ENCODE measurements at regions of chr12 and their contacts with region 1.

Region 1: DNA sequence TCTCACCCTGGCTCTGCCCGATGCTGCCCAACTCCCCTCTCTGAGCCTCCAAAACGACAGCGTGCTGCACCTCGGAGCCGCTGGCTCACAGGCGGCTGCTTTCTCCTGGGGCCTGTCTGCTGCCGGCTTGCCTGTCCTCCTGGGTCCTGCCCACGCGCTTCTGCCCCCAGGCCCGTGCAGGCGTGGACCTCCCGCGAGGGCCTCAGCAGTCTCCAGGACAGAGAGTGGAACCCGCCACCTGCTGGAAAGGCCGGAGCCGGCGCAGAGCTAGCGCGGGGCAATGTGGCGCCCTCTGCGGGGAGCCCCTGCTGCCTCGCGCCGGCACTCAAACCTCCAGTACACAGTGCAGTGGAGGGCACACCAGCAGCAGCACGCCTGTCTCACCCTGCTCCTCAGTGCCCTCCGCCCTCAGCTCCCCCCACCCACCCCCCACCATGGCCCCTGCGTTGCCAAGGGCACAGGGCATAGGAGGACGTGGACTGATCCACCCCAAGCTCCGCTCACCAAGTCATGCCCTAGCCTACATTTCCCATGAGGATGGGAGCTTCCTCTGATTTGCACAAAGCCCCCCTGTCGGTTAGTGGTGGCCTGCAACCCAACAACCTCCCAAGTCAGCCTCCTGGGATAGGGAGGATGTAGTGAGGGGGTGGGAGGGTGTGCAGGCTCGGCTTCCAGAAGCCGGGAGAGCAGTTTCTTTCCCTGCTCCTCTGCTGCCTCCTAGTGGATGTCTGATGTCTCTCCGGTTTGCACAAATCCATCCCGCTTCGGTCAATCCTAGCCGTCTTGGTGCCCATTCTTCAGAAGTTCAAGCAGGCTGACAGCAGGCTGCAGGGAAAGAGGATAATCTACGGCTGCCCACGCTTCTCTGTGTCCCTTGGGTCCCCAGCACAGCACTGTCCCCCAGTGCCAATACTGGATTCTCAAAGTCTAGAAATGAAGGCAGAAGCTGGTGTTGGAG is 25.2 kb downstream of the KRT8 start:
- DNase-seq: peak; percentile 94
- H3K4me3 Mint-ChIP-seq: peak overlapping the region; percentile 48
- H3K27ac Mint-ChIP-seq: no peak overlapping the region
- H3K4me1 Mint-ChIP-seq: peaks cover 48% of the 10 kb centered on the region
- H3K27me3 Mint-ChIP-seq: no peaks in the 10 kb centered on the region
- CTCF ChIP-seq: peak; percentile 89

Region 2: GRCh38 chr12:51863933-51864832 is 1015.5 kb before region 1 on chr12:
- CTCF ChIA-PET with region 1: no interaction called
- POLR2A ChIA-PET with region 1: no interaction called
- intact Hi-C with region 1: no loop called
- DNase-seq: no peak
- H3K4me3 Mint-ChIP-seq: no peak overlapping the region
- H3K27ac Mint-ChIP-seq: no peak overlapping the region
- H3K4me1 Mint-ChIP-seq: no peaks in the 10 kb centered on the region
- H3K27me3 Mint-ChIP-seq: no peaks in the 10 kb centered on the region
- CTCF ChIP-seq: no peak

Region 3: DNA sequence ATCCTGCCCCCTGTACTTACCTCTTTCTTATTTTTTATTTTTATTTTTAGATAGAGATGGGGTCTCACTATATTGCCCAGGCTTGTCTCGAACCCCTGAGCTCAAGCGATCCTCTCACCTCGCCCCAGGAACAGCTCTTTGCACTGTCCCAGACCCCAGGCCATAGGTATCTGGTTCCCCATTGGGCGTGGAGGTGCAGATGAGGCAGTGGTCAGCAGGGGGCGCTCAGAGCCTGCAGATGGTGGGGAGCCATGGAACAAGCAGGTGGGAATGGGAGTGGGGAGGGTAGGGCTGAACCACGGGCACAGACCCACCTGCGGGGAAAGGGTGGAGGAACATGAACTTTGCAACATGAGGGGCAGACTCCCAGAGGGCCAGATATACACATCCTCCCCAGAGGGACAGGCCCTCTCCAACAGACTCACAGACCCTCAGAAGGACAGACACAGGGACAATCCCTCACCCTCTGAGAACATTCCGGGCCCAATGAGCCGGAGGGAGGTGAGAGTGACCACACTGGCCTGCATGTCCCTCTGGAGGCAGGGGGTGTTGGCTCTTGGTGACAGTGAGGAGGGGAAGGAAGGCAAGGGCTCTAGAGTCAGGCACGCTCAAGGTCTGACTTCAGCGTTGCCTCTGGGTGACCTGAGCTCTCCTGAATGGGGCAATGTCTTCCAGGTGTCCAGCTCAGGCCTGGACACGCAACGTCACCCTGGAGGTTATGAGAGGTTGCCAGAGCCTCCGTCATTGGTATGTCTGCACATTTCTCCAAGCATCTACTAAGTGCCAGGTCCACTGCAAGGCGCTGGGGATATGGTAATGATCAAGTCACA is 722.7 kb before region 1 on chr12:
- CTCF ChIA-PET with region 1: interaction called, 313 read pairs
- POLR2A ChIA-PET with region 1: interaction called, 142 read pairs
- intact Hi-C with region 1: loop called (anchors 1 kb)
- DNase-seq: peak; percentile 85
- H3K4me3 Mint-ChIP-seq: no peak overlapping the region
- H3K27ac Mint-ChIP-seq: peak overlapping the region; percentile 91
- H3K4me1 Mint-ChIP-seq: peaks cover 30% of the 10 kb centered on the region
- H3K27me3 Mint-ChIP-seq: no peaks in the 10 kb centered on the region
- CTCF ChIP-seq: peak; percentile 98

Region 4: DNA sequence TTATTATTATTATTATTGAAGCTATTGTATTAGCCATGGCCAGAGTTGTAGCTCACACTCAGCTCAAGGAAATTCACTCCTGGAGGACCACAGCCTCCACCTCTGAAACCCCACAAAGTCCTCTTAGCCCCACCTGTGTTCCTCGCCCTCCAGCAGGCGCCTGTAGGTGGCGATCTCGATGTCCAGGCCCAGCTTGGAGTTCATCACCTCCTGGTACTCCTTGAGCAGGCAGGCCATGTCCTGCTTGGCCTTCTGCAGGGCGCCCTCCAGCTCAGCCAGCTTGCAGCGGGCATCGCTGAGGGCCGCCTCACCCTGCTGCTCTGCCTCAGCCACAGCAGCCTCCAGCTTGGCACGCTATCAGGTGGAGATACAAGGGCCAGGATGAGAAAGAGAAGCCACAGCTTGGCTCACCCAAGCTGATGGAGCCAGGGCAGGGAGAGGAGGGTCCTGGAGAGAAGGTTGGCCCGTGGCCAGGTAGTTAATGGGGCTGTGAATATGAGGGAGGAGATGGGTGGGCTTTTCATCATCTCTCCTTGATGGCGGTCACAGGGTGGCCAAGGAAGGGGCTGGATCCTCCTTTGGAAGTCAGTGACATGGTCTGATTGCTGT is 517.5 kb before region 1 on chr12:
- CTCF ChIA-PET with region 1: interaction called, 174 read pairs
- POLR2A ChIA-PET with region 1: no interaction called
- intact Hi-C with region 1: no loop called
- DNase-seq: peak; percentile 19
- H3K4me3 Mint-ChIP-seq: no peak overlapping the region
- H3K27ac Mint-ChIP-seq: no peak overlapping the region
- H3K4me1 Mint-ChIP-seq: no peaks in the 10 kb centered on the region
- H3K27me3 Mint-ChIP-seq: peaks cover 9% of the 10 kb centered on the region
- CTCF ChIP-seq: peak; percentile 18

Region 5: GRCh38 chr12:52390739-52391617 is 488.7 kb before region 1 on chr12:
- CTCF ChIA-PET with region 1: interaction called, 112 read pairs
- POLR2A ChIA-PET with region 1: no interaction called
- intact Hi-C with region 1: loop called (anchors 1 kb)
- DNase-seq: peak; percentile 67
- H3K4me3 Mint-ChIP-seq: no peak overlapping the region
- H3K27ac Mint-ChIP-seq: no peak overlapping the region
- H3K4me1 Mint-ChIP-seq: peaks cover 24% of the 10 kb centered on the region
- H3K27me3 Mint-ChIP-seq: no peaks in the 10 kb centered on the region
- CTCF ChIP-seq: peak; percentile 86

Region 6: DNA sequence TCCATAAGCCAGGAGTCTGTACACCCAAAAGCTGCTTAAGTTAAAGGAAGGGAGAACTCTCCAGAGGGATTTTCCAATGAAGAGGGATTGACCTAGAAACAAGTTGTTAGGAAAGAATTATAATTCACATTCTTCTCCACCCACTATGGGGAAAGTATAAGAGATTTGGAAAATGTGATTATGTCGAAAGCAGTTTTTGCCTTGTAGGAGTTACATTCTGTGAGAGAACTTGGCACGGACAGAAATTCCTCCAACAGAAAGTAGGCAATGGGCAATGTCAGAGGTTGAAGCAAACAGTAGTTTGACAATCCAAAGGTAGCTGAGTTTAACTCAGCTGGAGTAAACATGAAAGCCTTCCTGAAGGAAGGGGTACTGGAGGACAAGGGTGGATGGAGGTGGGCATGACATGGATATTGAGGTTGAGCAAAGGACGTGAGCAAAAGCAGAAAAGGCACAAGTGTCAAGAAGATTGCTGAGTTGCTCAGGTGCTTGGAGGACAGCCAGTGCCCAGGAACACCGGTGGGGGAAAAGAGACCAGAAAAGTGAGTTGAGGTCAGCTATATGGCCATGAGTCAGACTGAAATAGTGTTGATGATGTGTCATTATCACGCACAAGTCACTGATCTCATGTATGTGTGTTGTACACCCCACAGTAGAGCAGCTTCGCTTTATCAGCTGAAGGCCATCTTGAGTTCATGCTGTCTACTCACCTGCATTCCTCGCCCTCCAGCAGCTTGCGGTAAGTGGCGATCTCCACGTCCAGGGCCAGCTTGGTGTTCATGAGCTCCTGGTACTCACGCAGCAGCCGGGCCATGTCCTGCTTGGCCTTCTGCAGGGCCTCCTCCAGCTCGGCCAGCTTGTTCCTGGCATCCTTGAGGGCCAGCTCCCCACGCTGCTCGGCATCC is 363.5 kb before region 1 on chr12:
- CTCF ChIA-PET with region 1: interaction called, 77 read pairs
- POLR2A ChIA-PET with region 1: interaction called, 675 read pairs
- intact Hi-C with region 1: no loop called
- DNase-seq: peak; percentile 43
- H3K4me3 Mint-ChIP-seq: peak overlapping the region; percentile 80
- H3K27ac Mint-ChIP-seq: peak overlapping the region; percentile 12
- H3K4me1 Mint-ChIP-seq: peaks cover 30% of the 10 kb centered on the region
- H3K27me3 Mint-ChIP-seq: no peaks in the 10 kb centered on the region
- CTCF ChIP-seq: no peak

Region 7: GRCh38 chr12:52741392-52742195 is 138.1 kb before region 1 on chr12:
- CTCF ChIA-PET with region 1: no interaction called
- POLR2A ChIA-PET with region 1: no interaction called
- intact Hi-C with region 1: no loop called
- DNase-seq: peak; percentile 75
- H3K4me3 Mint-ChIP-seq: no peak overlapping the region
- H3K27ac Mint-ChIP-seq: no peak overlapping the region
- H3K4me1 Mint-ChIP-seq: no peaks in the 10 kb centered on the region
- H3K27me3 Mint-ChIP-seq: peaks cover 46% of the 10 kb centered on the region
- CTCF ChIP-seq: no peak

Region 8: GRCh38 chr12:52895061-52895887 is 15.6 kb after region 1 on chr12:
- CTCF ChIA-PET with region 1: interaction called, 107 read pairs
- POLR2A ChIA-PET with region 1: no interaction called
- intact Hi-C with region 1: no loop called
- DNase-seq: peak; percentile 53
- H3K4me3 Mint-ChIP-seq: no peak overlapping the region
- H3K27ac Mint-ChIP-seq: peak overlapping the region; percentile 35
- H3K4me1 Mint-ChIP-seq: peaks cover 12% of the 10 kb centered on the region
- H3K27me3 Mint-ChIP-seq: no peaks in the 10 kb centered on the region
- CTCF ChIP-seq: no peak